Activated B cell treated with CpG ODN at 0.5 μM for 24 hours (primary cell): ENCODE measurements at regions of chr5 and their contacts with region 1.

Region 1: DNA sequence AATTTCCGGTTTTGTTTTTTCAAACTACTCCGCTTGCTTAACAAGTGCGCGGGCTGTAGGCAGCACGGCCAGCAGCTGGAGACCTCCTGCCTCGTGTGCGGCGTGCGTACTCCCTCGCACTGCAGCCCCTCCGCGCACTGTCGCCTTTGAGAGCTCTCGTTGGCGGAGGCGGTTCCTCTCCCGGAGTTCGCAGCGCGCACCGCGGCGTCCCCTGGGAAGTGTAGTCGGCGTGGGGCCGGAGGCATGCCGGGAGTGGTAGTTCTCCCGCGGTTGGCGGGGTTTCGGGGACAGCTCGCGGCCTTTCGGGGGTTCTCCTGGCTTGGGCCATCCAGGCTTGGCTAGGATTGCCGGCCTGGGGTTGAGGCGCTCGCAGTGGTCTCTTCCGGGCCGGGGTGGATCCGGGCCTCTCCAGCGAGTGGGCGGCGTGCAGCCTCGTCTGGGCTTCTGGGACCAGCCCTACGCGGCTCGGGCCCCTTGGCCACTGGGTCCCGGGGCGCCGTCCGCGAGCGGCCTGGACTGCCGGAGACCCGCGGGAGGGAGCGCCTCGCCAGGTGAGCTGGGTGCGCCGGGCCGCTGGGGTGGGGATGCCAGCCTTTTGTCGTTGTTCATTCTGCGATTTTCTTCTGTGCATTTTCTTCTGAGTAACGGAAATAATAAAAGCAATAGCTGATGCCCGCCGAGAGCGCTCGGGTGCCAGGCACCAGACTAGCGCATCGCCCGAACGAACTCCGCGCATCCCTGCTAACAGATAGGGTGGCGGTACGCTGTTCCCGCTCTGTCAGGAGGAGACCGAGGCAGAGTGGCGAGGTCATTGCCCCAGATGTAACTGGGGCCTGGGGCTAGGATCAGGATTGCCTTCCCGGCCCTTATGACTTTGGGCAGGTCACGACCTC is at the start of gene ZNF354C:
- DNase-seq: peak; percentile 80
- ATAC-seq: peak; percentile 97
- H3K4me3 Mint-ChIP-seq: peak within 1 kb of the TSS; percentile 92
- H3K27ac Mint-ChIP-seq: peak within 1 kb of the TSS; percentile 86
- H3K4me1 Mint-ChIP-seq: peaks cover 20% of the 10 kb centered on the region
- H3K27me3 Mint-ChIP-seq: no peaks in the 10 kb centered on the region
- CTCF ChIP-seq: no peak
- total RNA-seq, gene ZNF354C: 6.3 and 7.1 TPM in 2 replicates

Region 2: DNA sequence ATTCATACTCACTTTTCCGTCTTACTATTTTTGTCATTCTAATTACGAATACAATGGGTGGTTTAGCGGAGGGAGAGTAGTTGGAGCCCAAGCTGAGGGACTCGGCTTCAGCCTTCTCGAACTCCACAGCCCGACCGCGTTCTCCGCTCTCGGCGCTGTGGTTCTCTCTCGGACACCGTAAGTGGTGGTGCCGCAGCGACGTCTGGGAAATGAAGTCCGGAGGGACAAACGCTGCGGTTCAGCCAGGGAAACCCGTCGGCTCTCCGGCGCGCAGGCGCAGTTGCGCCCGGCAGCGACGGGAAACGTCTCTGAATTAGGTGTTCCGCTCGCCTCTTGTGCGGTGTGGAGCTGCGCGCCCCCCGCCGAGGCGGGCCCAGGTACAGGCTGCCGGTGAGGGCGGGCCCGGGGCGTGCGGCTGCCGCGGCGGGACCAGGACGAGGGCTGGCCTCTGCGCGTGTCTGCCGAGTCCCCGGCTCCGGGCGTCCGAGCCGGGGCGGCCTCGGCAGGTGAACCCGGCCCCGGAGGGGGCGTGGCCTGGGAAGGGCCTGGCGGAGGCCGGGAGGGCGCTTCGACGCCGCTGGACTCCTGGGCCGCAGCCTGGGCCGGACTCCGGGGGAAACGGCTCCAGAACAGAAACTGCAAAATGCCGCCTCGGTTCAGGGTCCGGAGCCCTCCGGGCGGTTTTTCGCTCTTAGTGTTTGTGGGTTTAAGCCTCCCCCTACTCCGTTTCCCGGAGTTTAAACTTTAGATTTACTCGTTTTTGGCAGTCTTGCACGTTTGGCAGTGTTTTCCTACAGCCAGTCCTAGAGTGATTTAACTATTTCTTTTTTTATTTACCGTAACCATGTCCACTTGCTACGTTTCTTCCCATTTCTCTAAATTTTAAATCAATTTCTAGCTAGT is 36.6 kb before region 1 on chr5 and contains the start of gene ZNF879:
- CTCF ChIA-PET with region 1: no interaction called
- POLR2A ChIA-PET with region 1: interaction called, 10 read pairs
- intact Hi-C with region 1: loop called (anchors 1 kb)
- DNase-seq: peak; percentile 94
- ATAC-seq: peak; percentile 92
- H3K4me3 Mint-ChIP-seq: peak within 1 kb of the TSS; percentile 93
- H3K27ac Mint-ChIP-seq: peak within 1 kb of the TSS; percentile 81
- H3K4me1 Mint-ChIP-seq: peaks cover 18% of the 10 kb centered on the region
- H3K27me3 Mint-ChIP-seq: peaks cover 2% of the 10 kb centered on the region
- CTCF ChIP-seq: no peak
- total RNA-seq, gene ZNF879: 8.2 and 9.4 TPM in 2 replicates